Activated CD4-positive, alpha-beta memory T cell treated with anti-CD3 and anti-CD28 coated beads for 36 hours (primary cell): ENCODE measurements at regions of chr17 and their contacts with region 1.

Region 1: GRCh38 chr17:55735731-55736405 is 13.2 kb upstream of the TMEM100 start:
- DNase-seq: peak; percentile 40
- H3K4me3 Mint-ChIP-seq: no peak overlapping the region
- H3K27ac Mint-ChIP-seq: peak overlapping the region; percentile 10
- H3K4me1 Mint-ChIP-seq: peaks cover 24% of the 10 kb centered on the region
- H3K27me3 Mint-ChIP-seq: peaks cover 41% of the 10 kb centered on the region

Region 2: GRCh38 chr17:54968262-54968987 is 767.4 kb before region 1 on chr17 and contains the starts of genes COX11 and STXBP4:
- CTCF ChIA-PET with region 1: no interaction called
- POLR2A ChIA-PET with region 1: no interaction called
- intact Hi-C with region 1: loop called (anchors 2 kb)
- DNase-seq: peak; percentile 97
- H3K4me3 Mint-ChIP-seq: no peak within 1 kb of the TSS
- H3K27ac Mint-ChIP-seq: no peak within 1 kb of the TSS
- H3K4me1 Mint-ChIP-seq: peaks cover 23% of the 10 kb centered on the region
- H3K27me3 Mint-ChIP-seq: no peaks in the 10 kb centered on the region
- total RNA-seq, gene COX11: 44.2 to 49.9 TPM
- total RNA-seq, gene STXBP4: 3.2 to 4.3 TPM

Region 3: GRCh38 chr17:55458977-55459376 is 276.9 kb before region 1 on chr17:
- CTCF ChIA-PET with region 1: no interaction called
- POLR2A ChIA-PET with region 1: no interaction called
- intact Hi-C with region 1: loop called (anchors 1 kb)
- DNase-seq: peak; percentile 81
- H3K4me3 Mint-ChIP-seq: no peak overlapping the region
- H3K27ac Mint-ChIP-seq: no peak overlapping the region
- H3K4me1 Mint-ChIP-seq: peaks cover 19% of the 10 kb centered on the region
- H3K27me3 Mint-ChIP-seq: peaks cover 17% of the 10 kb centered on the region

Region 4: DNA sequence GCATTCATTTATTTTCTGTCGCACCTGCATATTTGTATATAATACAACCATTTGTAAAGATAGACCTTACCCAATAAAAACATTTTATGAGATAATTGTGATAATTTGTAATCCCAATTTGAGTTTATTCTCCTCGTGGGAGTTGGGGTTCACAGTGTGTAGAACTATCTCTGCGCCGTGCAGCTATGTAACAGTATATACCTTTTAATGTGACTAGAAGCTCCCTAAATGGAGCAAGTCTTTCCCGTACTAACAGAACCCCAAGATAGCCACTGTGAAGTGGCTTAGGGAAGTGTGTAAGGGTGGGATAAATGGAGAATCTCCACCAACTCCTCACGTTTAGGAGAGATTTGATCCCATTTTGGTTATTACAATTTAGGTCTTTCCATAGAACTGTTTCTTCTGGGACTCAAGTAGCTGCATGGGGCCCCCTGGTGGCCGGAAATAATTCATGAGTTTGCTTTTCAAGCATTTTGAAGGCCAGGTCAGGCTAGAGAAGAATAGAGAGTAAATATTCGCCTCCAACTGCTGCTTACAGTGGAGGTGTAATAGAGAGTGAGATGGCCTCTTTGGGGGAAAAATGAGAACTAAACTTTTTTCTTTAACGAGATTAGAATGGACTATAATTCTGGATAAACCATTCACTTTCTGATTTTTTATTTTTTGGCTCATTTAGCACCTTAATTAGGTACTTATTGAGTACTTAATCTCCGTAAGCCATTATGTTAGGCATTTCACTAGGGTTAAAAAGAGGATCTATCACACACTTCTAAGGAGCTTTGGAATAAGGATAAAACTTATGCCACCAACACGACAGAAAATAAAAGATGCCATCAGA is 17.8 kb before region 1 on chr17:
- CTCF ChIA-PET with region 1: interaction called, 38 read pairs
- POLR2A ChIA-PET with region 1: no interaction called
- intact Hi-C with region 1: no loop called
- DNase-seq: peak; percentile 74
- H3K4me3 Mint-ChIP-seq: no peak overlapping the region
- H3K27ac Mint-ChIP-seq: no peak overlapping the region
- H3K4me1 Mint-ChIP-seq: no peaks in the 10 kb centered on the region
- H3K27me3 Mint-ChIP-seq: peaks cover 25% of the 10 kb centered on the region

Region 5: DNA sequence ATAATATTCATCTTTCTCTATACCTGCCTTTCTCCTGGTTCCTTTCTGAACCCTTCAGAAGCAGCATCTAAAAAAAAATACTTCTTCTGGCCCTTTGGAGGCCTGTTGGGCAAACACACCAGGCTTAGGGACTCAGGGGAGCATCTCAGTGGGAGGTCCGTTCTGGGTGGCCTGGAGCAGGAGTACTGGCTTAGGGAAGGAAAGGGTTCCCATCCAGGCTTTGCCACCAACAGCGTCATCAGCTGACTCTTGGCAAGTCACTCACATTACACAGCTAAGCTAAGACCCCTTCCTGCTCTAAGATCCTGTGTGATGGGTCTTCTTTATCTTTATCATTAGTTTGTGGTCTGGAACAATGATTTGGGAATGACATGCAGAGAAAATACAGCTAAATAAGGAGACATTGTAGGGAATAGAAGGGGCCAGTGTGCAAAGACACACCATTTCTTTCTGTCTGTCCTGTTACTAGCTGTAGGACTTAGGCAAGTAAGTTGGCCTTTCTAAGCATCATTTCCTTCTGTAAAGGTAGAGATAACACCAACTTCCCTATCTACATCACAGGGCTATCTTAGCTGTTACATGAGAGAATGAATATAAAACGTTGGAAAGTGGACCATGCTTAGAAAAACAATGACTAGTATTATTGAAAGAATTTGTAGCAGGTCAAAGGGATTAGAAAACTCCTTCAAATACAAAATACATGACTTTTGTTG is 24.9 kb after region 1 on chr17:
- CTCF ChIA-PET with region 1: no interaction called
- POLR2A ChIA-PET with region 1: no interaction called
- intact Hi-C with region 1: no loop called
- DNase-seq: no peak
- H3K4me3 Mint-ChIP-seq: no peak overlapping the region
- H3K27ac Mint-ChIP-seq: no peak overlapping the region
- H3K4me1 Mint-ChIP-seq: no peaks in the 10 kb centered on the region
- H3K27me3 Mint-ChIP-seq: no peaks in the 10 kb centered on the region

Region 6: GRCh38 chr17:55806745-55807495 is 71.1 kb after region 1 on chr17:
- CTCF ChIA-PET with region 1: no interaction called
- POLR2A ChIA-PET with region 1: no interaction called
- intact Hi-C with region 1: loop called (anchors 1 kb)
- DNase-seq: peak; percentile 18
- H3K4me3 Mint-ChIP-seq: no peak overlapping the region
- H3K27ac Mint-ChIP-seq: peak overlapping the region; percentile 45
- H3K4me1 Mint-ChIP-seq: peaks cover 9% of the 10 kb centered on the region
- H3K27me3 Mint-ChIP-seq: peaks cover 1% of the 10 kb centered on the region

Region 7: GRCh38 chr17:55895112-55895759 is 159.4 kb after region 1 on chr17:
- CTCF ChIA-PET with region 1: no interaction called
- POLR2A ChIA-PET with region 1: no interaction called
- intact Hi-C with region 1: no loop called
- DNase-seq: no peak
- H3K4me3 Mint-ChIP-seq: no peak overlapping the region
- H3K27ac Mint-ChIP-seq: no peak overlapping the region
- H3K4me1 Mint-ChIP-seq: no peaks in the 10 kb centered on the region
- H3K27me3 Mint-ChIP-seq: peaks cover 13% of the 10 kb centered on the region